ENCODE measurements at regions of chr2 and their contacts with region 1.

Region 1: GRCh38 chr2:85648619-85649018 is 19.4 kb downstream of the SFTPB start:
- DNase-seq: peak; percentile 52
- ATAC-seq: peak; percentile 35
- H3K4me3 ChIP-seq: no peak overlapping the region
- H3K4me3 Mint-ChIP-seq: peak overlapping the region; percentile 2
- H3K27ac ChIP-seq: peak overlapping the region in 1 of 2 donors; percentile 1
- H3K27ac Mint-ChIP-seq: no peak overlapping the region
- H3K4me1 ChIP-seq: peaks cover 18 to 26% of the 10 kb centered on the region in 2 donors
- H3K4me1 Mint-ChIP-seq: peaks cover 22% of the 10 kb centered on the region
- H3K27me3 ChIP-seq: no peaks in the 10 kb centered on the region
- H3K27me3 Mint-ChIP-seq: no peaks in the 10 kb centered on the region
- CTCF ChIP-seq: peak; percentile 69

Region 2: DNA sequence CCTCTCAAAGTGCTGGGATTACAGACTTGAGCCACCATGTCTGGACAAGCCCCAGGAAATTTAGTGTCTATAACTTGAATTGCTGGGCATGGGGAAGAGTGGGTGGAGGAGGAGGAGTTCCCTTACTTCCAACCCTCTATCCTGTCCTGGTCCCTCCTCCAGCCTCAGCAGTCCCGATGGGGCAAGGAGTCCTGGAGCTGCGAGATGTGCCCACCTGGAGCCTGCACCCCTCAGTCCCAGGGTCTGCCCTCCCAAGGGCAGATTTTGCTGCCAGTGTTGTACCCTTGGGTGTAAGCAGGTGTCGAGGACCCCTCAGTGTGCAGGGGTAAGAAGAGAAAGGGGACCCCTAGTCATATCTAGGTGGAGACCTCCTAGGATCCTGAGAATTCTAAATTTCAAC is 68.4 kb before region 1 on chr2:
- CTCF ChIA-PET with region 1: no interaction called
- POLR2A ChIA-PET with region 1: no interaction called
- intact Hi-C with region 1: no loop called
- DNase-seq: no peak
- ATAC-seq: no peak
- H3K4me3 ChIP-seq: no peak overlapping the region
- H3K4me3 Mint-ChIP-seq: peak overlapping the region; percentile 10
- H3K27ac ChIP-seq: no peak overlapping the region
- H3K27ac Mint-ChIP-seq: no peak overlapping the region
- H3K4me1 ChIP-seq: peaks cover 29 to 52% of the 10 kb centered on the region in 2 donors
- H3K4me1 Mint-ChIP-seq: peaks cover 52% of the 10 kb centered on the region
- H3K27me3 ChIP-seq: no peaks in the 10 kb centered on the region
- H3K27me3 Mint-ChIP-seq: no peaks in the 10 kb centered on the region
- CTCF ChIP-seq: no peak

Region 3: GRCh38 chr2:85635636-85636035 is 13.0 kb before region 1 on chr2:
- CTCF ChIA-PET with region 1: interaction called, 28 read pairs
- POLR2A ChIA-PET with region 1: no interaction called
- intact Hi-C with region 1: loop called (anchors 1 kb)
- DNase-seq: no peak
- ATAC-seq: no peak
- H3K4me3 ChIP-seq: no peak overlapping the region
- H3K4me3 Mint-ChIP-seq: no peak overlapping the region
- H3K27ac ChIP-seq: no peak overlapping the region
- H3K27ac Mint-ChIP-seq: no peak overlapping the region
- H3K4me1 ChIP-seq: no peaks in the 10 kb centered on the region
- H3K4me1 Mint-ChIP-seq: peaks cover 4% of the 10 kb centered on the region
- H3K27me3 ChIP-seq: no peaks in the 10 kb centered on the region
- H3K27me3 Mint-ChIP-seq: no peaks in the 10 kb centered on the region
- CTCF ChIP-seq: no peak

Region 4: GRCh38 chr2:85694052-85695025 is 45.7 kb after region 1 on chr2 and contains the start of gene GNLY:
- CTCF ChIA-PET with region 1: no interaction called
- POLR2A ChIA-PET with region 1: interaction called, 11 read pairs
- intact Hi-C with region 1: no loop called
- DNase-seq: no peak
- ATAC-seq: no peak
- H3K4me3 ChIP-seq: no peak within 1 kb of the TSS
- H3K4me3 Mint-ChIP-seq: no peak within 1 kb of the TSS
- H3K27ac ChIP-seq: no peak within 1 kb of the TSS
- H3K27ac Mint-ChIP-seq: no peak within 1 kb of the TSS
- H3K4me1 ChIP-seq: no peaks in the 10 kb centered on the region
- H3K4me1 Mint-ChIP-seq: peaks cover 4% of the 10 kb centered on the region
- H3K27me3 ChIP-seq: no peaks in the 10 kb centered on the region
- H3K27me3 Mint-ChIP-seq: peaks cover 5% of the 10 kb centered on the region
- CTCF ChIP-seq: no peak
- total RNA-seq, gene GNLY: 4.2 and 4.3 TPM in 2 replicates

Measured in B cell (primary cell).